ENCODE measurements at regions of chr10 and their contacts with region 1.

Region 1: DNA sequence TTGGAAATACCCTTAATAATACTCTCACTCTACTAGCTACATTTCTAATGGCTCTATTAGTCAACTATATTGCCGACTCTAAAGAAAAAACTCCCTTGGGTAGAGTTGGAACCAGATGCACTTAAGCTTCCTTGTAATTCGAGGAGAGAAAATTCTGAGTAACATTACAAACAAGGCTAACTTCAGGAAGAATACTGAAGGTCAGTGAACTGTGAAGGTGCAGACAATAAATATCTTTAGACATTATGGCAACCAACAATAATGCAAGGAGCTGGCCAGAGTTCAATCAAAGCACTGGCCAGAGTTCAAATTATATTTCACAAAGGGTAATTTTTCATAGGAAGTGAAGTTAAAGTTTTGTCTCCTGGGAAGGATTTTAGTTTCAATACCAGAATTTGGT is 40.7 kb upstream of the MRLN start:
- DNase-seq: no peak
- H3K4me3 ChIP-seq: no peak overlapping the region
- H3K27ac ChIP-seq: no peak overlapping the region
- H3K4me1 ChIP-seq: no peaks in the 10 kb centered on the region
- H3K27me3 ChIP-seq: no peaks in the 10 kb centered on the region
- CTCF ChIP-seq: no peak
- EP300 ChIP-seq: no peak
- POLR2A ChIP-seq: no peak
- RAD21 ChIP-seq: no peak

Region 2: DNA sequence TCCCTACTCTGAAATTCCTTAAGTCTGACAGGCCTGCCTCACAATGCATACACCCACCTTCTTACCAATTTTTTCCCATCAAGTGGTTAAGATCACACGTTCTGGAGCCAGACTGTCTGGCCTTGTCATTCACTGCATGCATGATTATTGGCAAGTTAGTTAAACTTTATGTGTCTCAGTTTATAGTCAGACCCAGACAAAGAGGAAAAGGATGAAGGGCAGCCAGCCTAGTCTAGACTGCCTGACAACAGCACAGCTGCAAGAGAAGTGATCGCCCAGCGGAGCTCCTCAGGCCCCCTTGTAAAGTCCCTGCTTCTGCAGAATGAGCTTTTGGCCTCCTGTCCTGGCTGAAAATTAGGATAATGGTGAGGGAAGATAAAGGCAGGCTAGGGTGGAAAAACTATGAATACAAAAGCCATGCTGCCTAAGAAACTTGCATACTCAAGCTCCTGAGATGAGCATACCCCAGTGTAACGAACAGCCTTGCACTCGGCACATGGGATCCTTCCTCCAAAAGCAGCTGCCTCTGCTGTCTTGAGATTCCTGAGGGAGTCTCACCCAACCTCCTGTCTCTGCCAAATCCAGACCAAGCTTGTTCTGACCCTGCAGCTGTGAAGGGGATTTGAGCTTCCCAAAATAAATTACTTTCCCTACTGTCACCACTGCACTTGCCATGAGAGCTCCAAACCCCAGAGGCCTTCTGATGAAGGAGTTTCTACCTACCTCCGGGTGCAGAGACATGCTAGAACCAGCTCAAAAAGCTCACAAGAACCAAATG is 14.0 kb before region 1 on chr10:
- CTCF ChIA-PET with region 1: no interaction called
- POLR2A ChIA-PET with region 1: no interaction called
- DNase-seq: no peak
- H3K4me3 ChIP-seq: no peak overlapping the region
- H3K27ac ChIP-seq: no peak overlapping the region
- H3K4me1 ChIP-seq: no peaks in the 10 kb centered on the region
- H3K27me3 ChIP-seq: no peaks in the 10 kb centered on the region
- CTCF ChIP-seq: no peak
- EP300 ChIP-seq: no peak
- POLR2A ChIP-seq: no peak
- RAD21 ChIP-seq: no peak

Region 3: GRCh38 chr10:59808896-59809643 is 15.2 kb after region 1 on chr10:
- CTCF ChIA-PET with region 1: interaction called, 14 read pairs
- POLR2A ChIA-PET with region 1: no interaction called
- DNase-seq: peak; percentile 43 to 72
- H3K4me3 ChIP-seq: no peak overlapping the region
- H3K27ac ChIP-seq: no peak overlapping the region
- H3K4me1 ChIP-seq: peaks cover 0 to 10% (median 2%) of the 10 kb centered on the region in 4 experiments; a peak in 5 of 7 replicates
- H3K27me3 ChIP-seq: no peaks in the 10 kb centered on the region; a peak in 1 of 7 replicates
- CTCF ChIP-seq: peak; percentile 58 to 87 (median 84)
- EP300 ChIP-seq: no peak
- POLR2A ChIP-seq: no peak
- RAD21 ChIP-seq: peak; percentile 64 to 71

Measured in H1 (cell line).